ENCODE measurements at regions of chr9 and their contacts with region 1.

Region 1: GRCh38 chr9:113591001-113591898 is 127.7 kb downstream of the RGS3 start:
- DNase-seq: no peak
- H3K27ac ChIP-seq: peak overlapping the region; percentile 32
- CTCF ChIP-seq: peak; percentile 89

Region 2: DNA sequence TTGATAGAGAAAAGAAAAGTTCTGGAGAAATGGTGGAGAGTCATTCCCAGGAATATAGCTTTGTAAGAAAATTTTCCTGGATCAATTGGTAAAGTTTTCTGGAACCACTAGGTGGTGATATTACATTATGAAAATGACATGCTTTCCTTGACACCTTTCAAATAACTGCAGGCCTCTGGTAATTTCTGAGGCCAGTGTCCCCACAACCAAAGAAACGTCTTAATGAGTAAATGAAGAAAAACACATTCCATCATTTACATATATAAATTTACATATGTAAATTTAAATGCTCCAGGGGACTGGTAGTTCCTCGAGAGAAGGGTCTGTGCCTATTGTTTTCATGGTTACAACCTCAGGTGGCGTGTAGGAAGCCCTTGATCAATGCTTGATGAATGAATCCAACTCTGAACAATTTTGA is 144.9 kb before region 1 on chr9:
- CTCF ChIA-PET with region 1: interaction called, 14 read pairs
- POLR2A ChIA-PET with region 1: no interaction called
- DNase-seq: peak; percentile 84
- H3K27ac ChIP-seq: no peak overlapping the region
- CTCF ChIP-seq: peak; percentile 79

Region 3: GRCh38 chr9:113578882-113579282 is 12.4 kb before region 1 on chr9:
- CTCF ChIA-PET with region 1: interaction called, 11 read pairs
- POLR2A ChIA-PET with region 1: no interaction called
- DNase-seq: peak; percentile 98
- H3K27ac ChIP-seq: peak overlapping the region; percentile 74
- CTCF ChIP-seq: no peak

Region 4: DNA sequence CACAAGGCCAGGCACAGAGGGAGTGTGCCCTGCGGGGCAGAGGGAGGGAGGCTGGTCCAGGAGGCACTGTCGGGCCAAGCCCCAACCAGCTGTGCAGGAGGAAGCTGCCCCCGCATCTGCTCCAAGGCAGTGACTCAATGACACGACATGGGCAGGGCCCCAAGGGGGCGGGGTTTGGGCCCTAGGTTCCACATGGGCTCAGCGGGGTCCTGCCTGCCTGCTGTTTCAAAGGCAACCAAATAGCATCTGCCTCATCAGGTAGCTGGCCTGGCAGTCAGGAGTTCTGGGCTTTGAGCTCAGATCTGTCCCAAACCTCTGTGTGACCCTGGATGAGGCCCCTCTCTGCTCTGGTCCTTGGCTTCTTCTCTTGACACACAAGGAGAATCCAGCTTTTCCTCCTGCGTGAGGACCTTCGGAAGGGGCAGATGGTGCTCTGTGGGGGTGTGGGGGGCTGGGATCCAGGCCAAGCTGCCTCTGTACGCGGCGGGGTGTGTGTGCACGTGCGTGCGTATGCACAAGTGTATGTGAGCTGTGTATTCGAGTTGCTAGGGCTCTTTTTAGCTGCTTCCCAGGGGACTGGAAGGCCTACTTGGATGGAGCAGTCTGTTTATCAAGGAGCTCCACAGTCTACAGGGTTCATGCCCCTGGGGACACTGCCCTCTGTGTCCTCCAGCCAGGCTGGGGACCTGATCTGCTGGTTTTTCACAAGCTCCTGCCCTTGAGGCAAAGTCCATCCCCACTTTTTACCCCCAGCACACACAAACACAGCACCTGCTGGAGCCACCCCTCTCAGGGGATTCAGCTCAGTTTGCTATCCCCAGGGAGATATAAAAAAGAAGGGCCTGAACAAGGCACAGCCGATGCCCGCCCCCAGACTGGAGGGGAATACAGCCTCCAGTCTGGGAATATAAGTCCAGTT is 11.1 kb after region 1 on chr9:
- CTCF ChIA-PET with region 1: interaction called, 13 read pairs
- POLR2A ChIA-PET with region 1: no interaction called
- DNase-seq: peak; percentile 93
- H3K27ac ChIP-seq: peak overlapping the region; percentile 28
- CTCF ChIP-seq: no peak

Region 5: DNA sequence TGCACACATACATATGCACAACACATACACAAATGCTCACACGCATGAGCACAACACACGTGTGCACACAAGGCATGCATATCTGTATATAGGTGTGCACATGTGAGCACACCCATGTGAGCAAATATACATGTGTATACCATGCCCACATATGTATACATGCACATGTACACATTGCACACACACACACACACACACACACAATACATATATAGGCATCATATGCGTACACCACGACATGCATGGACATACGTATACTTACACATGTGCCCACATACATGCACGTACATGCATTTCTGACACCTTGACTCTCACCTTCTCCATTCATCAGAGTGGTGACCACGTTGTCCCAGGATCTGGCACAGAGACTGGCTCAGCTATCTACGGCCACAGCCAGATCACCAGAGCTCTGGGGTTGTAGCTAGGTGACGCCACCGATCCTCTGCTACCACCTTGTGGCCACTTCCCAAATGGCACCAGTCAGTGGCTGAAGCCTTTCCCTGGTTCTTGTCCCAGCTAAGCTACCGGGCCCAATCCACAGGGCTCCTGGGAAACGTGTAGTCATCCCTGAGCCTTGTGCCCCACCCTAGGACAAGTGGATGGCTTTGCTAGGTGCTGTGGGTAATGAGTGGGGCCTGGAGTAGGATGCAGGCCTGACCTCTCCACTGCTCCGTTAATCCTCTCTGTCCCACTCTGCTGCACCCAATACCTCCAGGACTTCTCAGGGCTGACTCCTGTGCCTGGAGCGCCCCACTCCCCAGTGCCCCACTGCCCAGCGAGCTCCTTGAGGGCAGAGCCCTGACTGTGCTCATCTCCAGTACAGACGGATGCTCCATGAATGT is 66.7 kb after region 1 on chr9:
- CTCF ChIA-PET with region 1: interaction called, 116 read pairs
- POLR2A ChIA-PET with region 1: interaction called, 3 read pairs
- DNase-seq: peak; percentile 94
- H3K27ac ChIP-seq: no peak overlapping the region
- CTCF ChIP-seq: peak; percentile 100

Measured in RWPE1 (cell line).